Activated T-helper 2 cell treated with anti-CD3 and anti-CD28 coated beads, Interferon-gamma antibody, Interleukin-2, Interleukin-4, amounts not matched to agents 10 μg/mL and 5 μg/mL and 100 μg/mL, durations not matched to agents 14 hours and 24 hours and 36 hours (primary cell): ENCODE measurements at regions of chr4 and their contacts with region 1.

Region 1: GRCh38 chr4:113625902-113626301 is 135.6 kb downstream of the CAMK2D start:
- DNase-seq: no peak
- H3K4me3 Mint-ChIP-seq: peak overlapping the region; percentile 1
- H3K27ac Mint-ChIP-seq: peak overlapping the region; percentile 52
- H3K4me1 Mint-ChIP-seq: peaks cover 45% of the 10 kb centered on the region
- H3K27me3 Mint-ChIP-seq: no peaks in the 10 kb centered on the region

Region 2: GRCh38 chr4:113445286-113445685 is 180.6 kb before region 1 on chr4:
- intact Hi-C with region 1: loop called (anchors 5 kb)
- DNase-seq: no peak
- H3K4me3 Mint-ChIP-seq: no peak overlapping the region
- H3K27ac Mint-ChIP-seq: peak overlapping the region; percentile 80
- H3K4me1 Mint-ChIP-seq: peaks cover 25% of the 10 kb centered on the region
- H3K27me3 Mint-ChIP-seq: no peaks in the 10 kb centered on the region

Region 3: GRCh38 chr4:113566015-113566795 is 59.7 kb before region 1 on chr4:
- intact Hi-C with region 1: loop called (anchors 5 kb)
- DNase-seq: no peak
- H3K4me3 Mint-ChIP-seq: no peak overlapping the region
- H3K27ac Mint-ChIP-seq: no peak overlapping the region
- H3K4me1 Mint-ChIP-seq: peaks cover 48% of the 10 kb centered on the region
- H3K27me3 Mint-ChIP-seq: no peaks in the 10 kb centered on the region

Region 4: GRCh38 chr4:113607998-113608397 is 17.9 kb before region 1 on chr4:
- intact Hi-C with region 1: loop called (anchors 2 kb)
- DNase-seq: no peak
- H3K4me3 Mint-ChIP-seq: no peak overlapping the region
- H3K27ac Mint-ChIP-seq: no peak overlapping the region
- H3K4me1 Mint-ChIP-seq: peaks cover 25% of the 10 kb centered on the region
- H3K27me3 Mint-ChIP-seq: no peaks in the 10 kb centered on the region

Region 5: GRCh38 chr4:113636438-113636818 is 10.5 kb after region 1 on chr4:
- intact Hi-C with region 1: loop called (anchors 1 kb)
- DNase-seq: no peak
- H3K4me3 Mint-ChIP-seq: peak overlapping the region; percentile 45
- H3K27ac Mint-ChIP-seq: peak overlapping the region; percentile 63
- H3K4me1 Mint-ChIP-seq: peaks cover 47% of the 10 kb centered on the region
- H3K27me3 Mint-ChIP-seq: no peaks in the 10 kb centered on the region

Region 6: GRCh38 chr4:113823291-113823659 is 197.4 kb after region 1 on chr4:
- intact Hi-C with region 1: loop called (anchors 2 kb)
- DNase-seq: no peak
- H3K4me3 Mint-ChIP-seq: no peak overlapping the region
- H3K27ac Mint-ChIP-seq: no peak overlapping the region
- H3K4me1 Mint-ChIP-seq: peaks cover 42% of the 10 kb centered on the region
- H3K27me3 Mint-ChIP-seq: peaks cover 6% of the 10 kb centered on the region